Left cardiac atrium (tissue), 4 donors: ENCODE measurements at regions of chr11 and their contacts with region 1.

Region 1: GRCh38 chr11:112655371-112655770 is 305.8 kb upstream of the NCAM1 start:
- DNase-seq: peak; percentile 82
- ATAC-seq: peak; percentile 74 to 82

Region 2: DNA sequence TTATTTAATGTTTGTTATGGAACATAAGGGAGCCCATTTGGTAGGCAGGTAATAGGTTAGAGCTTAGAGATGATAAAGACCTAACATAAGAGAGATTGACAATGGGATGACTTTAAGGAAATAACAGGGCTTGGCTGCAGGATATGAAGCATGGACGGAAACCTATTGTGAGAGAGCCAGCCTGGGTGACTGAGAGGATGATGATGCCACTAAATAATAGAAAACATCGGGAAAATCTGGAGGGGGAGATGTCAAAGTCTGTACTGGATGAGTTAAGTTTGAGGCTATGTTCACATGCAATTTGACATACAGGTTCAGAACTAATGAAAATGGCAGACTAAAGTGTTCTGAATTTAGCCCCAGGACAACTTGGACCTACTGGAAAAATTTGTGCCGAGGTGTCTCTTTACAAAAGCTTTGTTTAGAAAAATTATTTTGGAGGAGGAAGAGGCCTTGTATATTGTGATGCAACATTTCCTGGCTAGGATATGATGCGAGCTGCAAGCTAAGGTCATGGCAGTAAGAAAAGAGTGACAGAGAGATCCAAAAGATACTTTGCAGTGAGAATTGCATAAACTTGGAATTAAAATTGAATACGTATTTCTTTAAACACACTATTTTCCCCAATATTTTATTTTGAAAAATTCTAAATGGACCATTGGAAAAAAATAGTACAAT is 55.4 kb before region 1 on chr11:
- intact Hi-C with region 1: no loop called
- DNase-seq: no peak
- ATAC-seq: no peak

Region 3: GRCh38 chr11:112751329-112751728 is 96.0 kb after region 1 on chr11:
- intact Hi-C with region 1: loop called in 1 of 2 experiments (anchors 10 kb)
- DNase-seq: peak; percentile 42
- ATAC-seq: peak; percentile 66 to 73

Region 4: DNA sequence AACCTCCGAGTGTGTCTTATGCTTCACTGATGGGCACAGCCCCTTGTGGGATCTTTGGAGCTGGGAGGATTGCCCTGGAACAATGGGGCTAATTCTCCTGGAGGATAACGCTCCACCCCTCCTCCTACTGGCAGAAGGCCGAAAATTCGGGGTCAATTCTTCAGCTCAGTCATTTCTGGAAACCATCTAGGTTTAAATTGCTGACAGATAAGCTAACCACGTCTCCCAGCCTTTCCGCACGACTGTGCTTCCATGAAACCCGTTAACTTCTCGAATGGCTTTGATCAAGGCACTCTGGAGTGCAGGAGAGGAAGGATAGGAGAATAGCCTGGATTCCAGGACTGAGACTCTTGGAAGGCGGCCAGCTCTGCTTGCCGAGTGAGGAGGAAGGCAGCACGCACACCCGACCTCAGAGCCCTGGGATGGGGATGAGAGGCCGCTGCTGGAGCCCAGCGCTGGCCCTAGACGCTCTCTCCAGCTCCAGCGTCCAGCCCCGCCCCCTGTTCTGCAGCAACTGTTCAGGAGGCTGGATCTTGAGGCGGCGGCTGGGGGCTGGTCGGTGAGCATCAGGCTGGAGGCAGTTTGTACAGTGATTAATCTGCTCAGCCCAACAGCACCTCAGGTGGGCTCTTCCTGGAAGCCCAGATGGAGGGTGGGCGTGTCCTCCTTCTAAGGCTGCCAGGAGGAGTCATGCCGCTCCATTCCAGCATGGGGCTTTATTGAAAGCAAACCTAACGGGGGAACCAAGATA is 129.1 kb after region 1 on chr11:
- intact Hi-C with region 1: loop called in 1 of 2 experiments (anchors 10 kb)
- DNase-seq: peak; percentile 84
- ATAC-seq: peak; percentile 75 to 83